ENCODE measurements at regions of chr17 and their contacts with region 1.

Region 1: DNA sequence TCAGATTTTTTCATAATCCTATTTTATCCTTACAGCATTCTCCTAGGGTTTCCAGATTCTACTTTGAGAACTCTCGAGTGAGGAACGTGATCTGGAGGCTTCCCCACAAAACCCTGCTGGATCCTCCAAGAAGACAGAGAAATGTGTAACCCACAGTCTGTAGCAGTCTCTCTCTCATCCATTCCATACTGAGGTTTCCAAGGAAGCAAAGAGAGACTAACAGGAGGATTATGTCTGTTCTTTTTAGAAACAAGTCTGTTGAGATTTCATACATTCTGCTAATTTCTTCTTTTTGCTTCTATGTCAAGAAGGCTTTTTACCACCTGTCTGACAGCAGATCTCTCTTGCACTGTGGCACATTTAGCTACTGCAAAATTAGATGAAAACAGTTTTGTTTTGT is 18.8 kb downstream of the TMIGD1 start:
- DNase-seq: no peak
- ATAC-seq: no peak
- H3K4me3 ChIP-seq: no peak overlapping the region
- H3K27ac ChIP-seq: no peak overlapping the region
- H3K4me1 ChIP-seq: no peaks in the 10 kb centered on the region
- H3K27me3 ChIP-seq: peaks cover 2% of the 10 kb centered on the region; the same call in 1 of the 2 replicates
- CTCF ChIP-seq: no peak

Region 2: DNA sequence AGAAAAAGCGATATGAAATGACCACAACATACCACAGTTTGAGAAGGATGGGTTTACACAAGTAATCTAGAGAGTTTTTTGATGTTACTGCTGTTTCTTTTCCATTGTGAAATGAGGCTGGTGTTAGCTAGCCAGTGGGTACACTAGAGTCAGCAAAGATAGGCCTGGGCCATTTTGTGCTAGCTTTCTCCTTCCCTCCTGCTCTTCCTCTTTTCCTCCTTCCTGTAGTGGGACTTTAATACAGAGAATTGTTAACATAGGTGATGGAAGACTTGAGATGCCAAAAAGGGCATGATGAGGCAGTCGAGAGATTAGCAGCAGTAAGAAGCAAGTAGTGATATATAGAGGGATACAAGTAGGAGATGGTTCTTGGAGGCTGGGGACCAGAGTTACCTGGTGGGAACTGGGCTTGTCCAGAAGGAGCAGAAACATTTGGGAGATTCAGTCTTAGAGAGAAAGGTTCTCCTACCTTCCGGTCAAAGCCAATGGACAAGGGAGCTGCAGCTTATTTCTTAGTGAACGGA is 190.8 kb before region 1 on chr17:
- CTCF ChIA-PET with region 1: no interaction called
- POLR2A ChIA-PET with region 1: no interaction called
- in situ Hi-C with region 1: no loop called
- intact Hi-C with region 1: no loop called
- DNase-seq: no peak
- ATAC-seq: no peak
- H3K4me3 ChIP-seq: no peak overlapping the region
- H3K27ac ChIP-seq: no peak overlapping the region
- H3K4me1 ChIP-seq: peaks cover 4% of the 10 kb centered on the region; the same call in 1 of the 2 replicates
- H3K27me3 ChIP-seq: no peaks in the 10 kb centered on the region
- CTCF ChIP-seq: no peak

Region 3: DNA sequence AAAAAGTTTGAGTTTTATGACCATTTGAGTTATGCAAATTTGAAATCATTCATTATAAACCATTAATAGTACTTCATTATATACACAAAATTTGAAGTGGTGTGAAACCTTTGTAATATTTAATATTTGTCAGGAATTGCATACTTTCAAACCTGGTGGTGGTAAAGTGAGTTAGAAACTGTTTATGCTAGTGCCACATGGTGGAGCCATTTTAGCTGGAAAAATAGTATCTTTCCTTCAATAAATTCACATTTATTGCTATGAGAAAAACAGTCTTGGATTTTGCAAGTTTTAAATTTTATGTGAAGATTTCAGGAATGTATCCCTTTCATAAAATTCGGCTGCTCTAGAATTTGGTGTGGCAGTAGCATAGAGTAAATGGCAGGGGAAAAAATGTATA is 16.1 kb before region 1 on chr17:
- CTCF ChIA-PET with region 1: no interaction called
- POLR2A ChIA-PET with region 1: interaction called, 12 read pairs
- in situ Hi-C with region 1: no loop called
- intact Hi-C with region 1: no loop called
- DNase-seq: no peak
- ATAC-seq: no peak
- H3K4me3 ChIP-seq: no peak overlapping the region
- H3K27ac ChIP-seq: no peak overlapping the region
- H3K4me1 ChIP-seq: no peaks in the 10 kb centered on the region
- H3K27me3 ChIP-seq: no peaks in the 10 kb centered on the region
- CTCF ChIP-seq: no peak

Measured in Panc1 (cell line).